ENCODE measurements at regions of chr17 and their contacts with region 1.

Region 1: DNA sequence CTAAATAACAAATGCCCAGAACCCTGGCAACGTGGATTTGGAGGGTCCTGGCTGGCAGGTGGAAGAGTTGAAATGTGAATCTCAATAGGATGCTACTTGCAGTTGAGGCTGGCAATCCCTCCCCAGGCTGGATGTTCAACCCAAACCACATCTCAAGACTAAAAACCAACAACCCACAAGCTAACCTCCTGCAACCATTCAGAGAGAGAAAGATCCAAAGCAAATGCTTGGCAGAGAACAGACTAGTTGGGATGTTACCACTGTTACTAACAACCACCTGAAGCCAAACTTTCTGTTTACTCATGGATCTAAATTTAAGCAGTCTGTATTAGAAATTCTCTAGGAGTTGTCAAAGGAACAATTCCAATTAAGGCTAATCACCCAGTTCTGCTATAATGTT is 27.9 kb downstream of the SMG6 start:
- DNase-seq: peak; percentile 44
- H3K4me3 Mint-ChIP-seq: no peak overlapping the region
- H3K27ac Mint-ChIP-seq: peak overlapping the region; percentile 69
- H3K4me1 Mint-ChIP-seq: peaks cover 61% of the 10 kb centered on the region
- H3K27me3 Mint-ChIP-seq: no peaks in the 10 kb centered on the region

Region 2: GRCh38 chr17:2253768-2254406 is 21.8 kb before region 1 on chr17:
- CTCF ChIA-PET with region 1: interaction called, 8 read pairs
- POLR2A ChIA-PET with region 1: interaction called, 19 read pairs
- DNase-seq: peak; percentile 54
- H3K4me3 Mint-ChIP-seq: peak overlapping the region; percentile 14
- H3K27ac Mint-ChIP-seq: peak overlapping the region; percentile 89
- H3K4me1 Mint-ChIP-seq: peaks cover 74% of the 10 kb centered on the region
- H3K27me3 Mint-ChIP-seq: no peaks in the 10 kb centered on the region

Region 3: DNA sequence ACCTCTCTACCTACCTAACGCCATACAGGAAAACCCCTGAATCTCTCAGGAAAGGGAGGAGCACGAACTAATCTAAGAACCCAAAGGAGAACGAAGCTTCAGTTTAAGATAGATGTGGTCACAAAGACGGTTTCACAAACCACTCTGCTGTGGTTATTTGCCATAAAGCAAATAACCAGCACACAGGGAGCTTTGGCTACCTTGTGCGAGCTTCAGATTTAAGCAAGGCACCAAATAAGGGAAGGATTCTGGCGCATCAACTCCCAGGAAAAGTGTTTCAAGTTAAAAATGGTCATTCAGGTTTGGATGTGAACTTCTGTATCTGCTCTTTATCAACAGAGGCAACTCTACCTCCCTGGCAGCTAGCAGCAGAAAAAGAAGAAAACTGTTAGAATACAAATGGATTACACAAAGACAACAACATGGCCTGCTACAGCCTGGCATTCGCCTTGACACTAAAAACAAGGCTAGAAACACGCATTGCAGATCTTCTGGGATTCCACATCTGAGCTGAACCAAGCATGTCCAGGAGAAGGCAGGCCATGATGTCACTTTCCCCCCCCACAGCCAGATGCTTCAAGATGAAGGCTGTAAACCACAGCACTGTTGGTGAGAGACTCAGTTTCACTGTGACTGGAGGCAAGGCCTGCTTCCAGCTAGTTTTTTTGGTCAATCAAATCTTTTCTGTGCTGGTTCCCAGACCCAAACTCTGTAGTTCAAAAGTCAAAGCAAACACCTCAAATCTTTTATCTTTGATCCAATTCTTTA is 15.8 kb before region 1 on chr17:
- CTCF ChIA-PET with region 1: interaction called, 3 read pairs
- POLR2A ChIA-PET with region 1: interaction called, 19 read pairs
- DNase-seq: peak; percentile 85
- H3K4me3 Mint-ChIP-seq: peak overlapping the region; percentile 67
- H3K27ac Mint-ChIP-seq: peak overlapping the region; percentile 94
- H3K4me1 Mint-ChIP-seq: peaks cover 80% of the 10 kb centered on the region
- H3K27me3 Mint-ChIP-seq: no peaks in the 10 kb centered on the region